Psoas muscle (tissue), 8 donors: ENCODE measurements at regions of chr2 and their contacts with region 1.

Region 1: DNA sequence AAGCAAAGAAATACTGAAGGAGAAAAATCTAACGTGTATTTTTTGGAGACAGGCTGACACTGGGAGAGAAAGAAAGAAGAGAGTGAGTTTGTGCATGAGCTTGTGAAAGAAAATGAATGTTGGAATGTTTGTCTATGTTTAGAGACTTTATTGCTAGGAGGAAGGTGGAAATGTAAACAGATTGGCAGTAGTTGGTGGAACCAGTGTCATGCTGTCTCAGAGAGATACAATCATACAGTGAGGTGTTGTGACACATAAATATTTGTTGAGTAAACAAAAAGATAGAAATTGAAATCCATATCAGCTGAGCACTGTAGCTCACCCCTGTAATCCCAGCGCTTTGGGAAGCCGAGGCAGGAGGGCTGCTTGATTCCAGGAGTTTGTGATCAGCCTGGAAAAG is 222.2 kb upstream of the MEIS1 start:
- DNase-seq: no peak
- ATAC-seq: no peak
- H3K4me3 ChIP-seq: no peak overlapping the region
- H3K27ac ChIP-seq: no peak overlapping the region
- H3K4me1 ChIP-seq: no peaks in the 10 kb centered on the region
- H3K27me3 ChIP-seq: no peaks in the 10 kb centered on the region
- CTCF ChIP-seq: no peak

Region 2: GRCh38 chr2:66134138-66134701 is 78.5 kb before region 1 on chr2:
- intact Hi-C with region 1: loop called in 1 of 2 experiments (anchors 10 kb)
- DNase-seq: no peak
- ATAC-seq: no peak
- H3K4me3 ChIP-seq: no peak overlapping the region
- H3K27ac ChIP-seq: no peak overlapping the region
- H3K4me1 ChIP-seq: no peaks in the 10 kb centered on the region
- H3K27me3 ChIP-seq: no peaks in the 10 kb centered on the region
- CTCF ChIP-seq: no peak